CD4-positive, alpha-beta memory T cell (primary cell): ENCODE measurements at regions of chr5 and their contacts with region 1.

Region 1: DNA sequence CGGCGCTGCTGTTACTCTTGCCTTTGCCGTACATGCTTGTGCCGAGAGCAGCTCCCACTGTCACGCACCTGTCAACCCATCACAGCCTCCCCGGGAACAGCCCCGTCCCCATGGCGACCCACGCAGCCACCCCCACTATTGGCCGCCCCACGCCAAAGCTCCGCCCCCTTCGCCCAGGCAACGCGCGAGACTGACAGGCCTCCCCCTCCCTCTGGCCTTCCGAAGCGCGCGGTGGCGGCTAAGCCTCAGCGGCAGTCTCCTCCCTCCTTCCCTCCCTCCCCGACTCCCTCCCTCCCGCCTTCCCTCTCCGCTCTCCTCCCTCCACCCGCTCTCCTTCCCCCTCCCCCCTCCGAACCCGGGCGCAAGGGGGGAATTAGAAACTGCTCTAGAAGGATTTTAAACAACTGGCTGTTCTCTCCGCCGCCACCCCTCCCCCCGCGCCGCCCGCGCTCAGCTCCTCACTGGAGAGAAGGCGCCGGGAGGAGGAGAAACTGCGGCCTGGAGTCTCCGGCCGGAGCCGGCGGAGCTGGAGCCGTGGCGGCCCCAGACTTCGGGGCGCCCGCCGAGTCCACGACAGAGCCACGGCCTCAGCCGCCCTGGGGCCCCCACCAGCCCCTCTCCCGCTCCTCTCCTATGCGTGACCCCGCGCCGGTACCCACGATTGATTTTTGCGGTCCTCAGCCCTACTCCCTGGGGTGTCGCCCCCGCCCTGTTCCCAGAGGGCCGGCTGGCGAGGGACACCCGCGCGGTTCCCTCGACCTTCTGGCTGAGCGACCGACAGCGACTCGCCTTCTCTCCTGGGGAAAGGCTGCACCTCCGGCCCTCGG is at the start of gene SSBP2:
- DNase-seq: peak; percentile 99 to 100 (median 100)
- H3K4me3 ChIP-seq: peak within 1 kb of the TSS in 1 of 2 donors; percentile 68
- H3K4me3 Mint-ChIP-seq: peak within 1 kb of the TSS; percentile 94 to 97 (median 96)
- H3K27ac ChIP-seq: peak within 1 kb of the TSS; percentile 75
- H3K27ac Mint-ChIP-seq: peak within 1 kb of the TSS; percentile 95 to 98 (median 96)
- H3K4me1 ChIP-seq: peaks cover 20% of the 10 kb centered on the region
- H3K4me1 Mint-ChIP-seq: peaks cover 15 to 39% (median 32%) of the 10 kb centered on the region in 4 donors
- H3K27me3 ChIP-seq: no peaks in the 10 kb centered on the region
- H3K27me3 Mint-ChIP-seq: peaks cover 0 to 2% of the 10 kb centered on the region in 2 donors
- total RNA-seq, gene SSBP2: 54.4 to 63.3 TPM

Region 2: GRCh38 chr5:81301271-81302015 is 449.8 kb before region 1 on chr5 and contains the start of gene ZCCHC9:
- CTCF ChIA-PET with region 1: interaction called, 3 read pairs
- POLR2A ChIA-PET with region 1: interaction called, 14 read pairs
- intact Hi-C with region 1: loop called (anchors 1 kb)
- DNase-seq: peak; percentile 90 to 94 (median 92)
- H3K4me3 ChIP-seq: peak within 1 kb of the TSS; percentile 98 to 99
- H3K4me3 Mint-ChIP-seq: peak within 1 kb of the TSS; percentile 91 to 99 (median 94)
- H3K27ac ChIP-seq: peak within 1 kb of the TSS; percentile 83
- H3K27ac Mint-ChIP-seq: peak within 1 kb of the TSS; percentile 87 to 99 (median 97)
- H3K4me1 ChIP-seq: peaks cover 30% of the 10 kb centered on the region
- H3K4me1 Mint-ChIP-seq: peaks cover 30 to 67% (median 49%) of the 10 kb centered on the region in 4 donors
- H3K27me3 ChIP-seq: no peaks in the 10 kb centered on the region
- H3K27me3 Mint-ChIP-seq: no peaks in the 10 kb centered on the region
- total RNA-seq, gene ZCCHC9: 25.2 to 26.1 TPM

Region 3: DNA sequence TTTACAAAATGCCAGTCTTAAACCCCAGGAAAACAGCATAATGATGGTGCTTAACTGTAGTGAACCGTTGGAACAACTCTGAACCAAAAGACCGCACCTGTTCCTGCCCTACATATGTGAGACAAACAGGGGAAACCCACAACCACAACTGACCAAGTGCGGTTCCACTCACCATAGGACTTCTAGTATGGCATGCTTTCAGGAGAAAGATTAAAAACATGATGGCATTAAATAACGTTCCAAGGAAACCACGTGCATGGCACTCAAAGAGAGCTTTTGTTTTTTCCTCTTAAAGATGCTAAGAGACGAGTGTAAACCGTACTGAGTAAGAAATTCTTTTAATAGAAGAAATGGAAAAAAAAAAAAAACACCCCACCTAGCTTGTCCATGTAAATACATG is 120.1 kb before region 1 on chr5:
- CTCF ChIA-PET with region 1: no interaction called
- POLR2A ChIA-PET with region 1: no interaction called
- intact Hi-C with region 1: no loop called
- DNase-seq: peak; percentile 37 to 57 (median 53)
- H3K4me3 ChIP-seq: no peak overlapping the region
- H3K4me3 Mint-ChIP-seq: no peak overlapping the region
- H3K27ac ChIP-seq: no peak overlapping the region
- H3K27ac Mint-ChIP-seq: peak overlapping the region in 3 of 7 donors; percentile 6 to 42 (median 25)
- H3K4me1 ChIP-seq: peaks cover 23% of the 10 kb centered on the region
- H3K4me1 Mint-ChIP-seq: peaks cover 4 to 11% (median 6%) of the 10 kb centered on the region in 4 donors
- H3K27me3 ChIP-seq: no peaks in the 10 kb centered on the region
- H3K27me3 Mint-ChIP-seq: no peaks in the 10 kb centered on the region

Region 4: GRCh38 chr5:81718300-81718699 is 32.9 kb before region 1 on chr5:
- CTCF ChIA-PET with region 1: no interaction called
- POLR2A ChIA-PET with region 1: interaction called, 17 read pairs
- intact Hi-C with region 1: no loop called
- DNase-seq: no peak
- H3K4me3 ChIP-seq: no peak overlapping the region
- H3K4me3 Mint-ChIP-seq: peak overlapping the region in 6 of 8 donors; percentile 2 to 51 (median 46)
- H3K27ac ChIP-seq: no peak overlapping the region
- H3K27ac Mint-ChIP-seq: peak overlapping the region in 1 of 7 donors; percentile 71
- H3K4me1 ChIP-seq: peaks cover 43% of the 10 kb centered on the region
- H3K4me1 Mint-ChIP-seq: peaks cover 40 to 82% (median 61%) of the 10 kb centered on the region in 4 donors
- H3K27me3 ChIP-seq: no peaks in the 10 kb centered on the region
- H3K27me3 Mint-ChIP-seq: no peaks in the 10 kb centered on the region

Region 5: DNA sequence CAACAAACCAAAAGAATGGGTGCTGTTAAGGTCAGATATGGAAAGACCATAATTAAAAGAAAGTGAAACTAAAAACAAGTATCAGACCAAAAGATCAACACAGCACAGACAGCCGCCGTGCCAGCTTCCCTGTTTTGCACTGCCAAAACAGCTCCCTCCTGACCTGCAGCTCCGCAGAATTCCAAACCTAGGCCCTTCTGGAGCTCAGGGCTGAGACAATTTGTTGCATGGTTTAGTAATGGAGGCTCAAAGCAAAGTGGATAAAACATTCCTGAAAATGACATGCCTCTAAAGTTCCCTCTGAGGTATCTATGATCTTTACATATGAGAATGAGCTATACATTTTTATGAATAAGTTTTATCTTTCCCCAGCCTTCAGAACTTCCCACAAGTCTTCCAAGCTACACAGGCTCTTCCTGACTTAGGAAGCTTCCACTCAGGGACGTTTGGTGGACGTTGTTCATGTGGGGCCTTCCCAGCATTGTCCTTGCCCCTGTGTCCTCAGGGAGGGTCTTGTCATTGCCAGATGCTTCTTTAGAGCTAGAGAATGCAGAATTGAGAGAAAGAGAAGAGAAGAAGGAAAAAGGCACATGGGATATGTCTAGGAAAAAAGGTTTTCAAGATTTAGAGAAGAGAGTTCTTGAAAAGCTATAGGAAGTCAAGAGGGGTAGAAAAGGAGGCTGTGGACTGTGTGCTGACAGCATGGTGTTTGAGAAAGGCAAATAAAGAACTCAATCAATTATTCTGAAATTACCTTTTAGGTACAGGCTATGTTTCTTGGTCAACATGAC is 28.1 kb after region 1 on chr5:
- CTCF ChIA-PET with region 1: interaction called, 5 read pairs
- POLR2A ChIA-PET with region 1: interaction called, 68 read pairs
- intact Hi-C with region 1: loop called (anchors 1 kb)
- DNase-seq: peak; percentile 18 to 48 (median 40)
- H3K4me3 ChIP-seq: peak overlapping the region; percentile 40 to 48
- H3K4me3 Mint-ChIP-seq: peak overlapping the region; percentile 84 to 92 (median 86)
- H3K27ac ChIP-seq: peak overlapping the region; percentile 69
- H3K27ac Mint-ChIP-seq: peak overlapping the region; percentile 85 to 97 (median 94)
- H3K4me1 ChIP-seq: peaks cover 17% of the 10 kb centered on the region
- H3K4me1 Mint-ChIP-seq: peaks cover 16 to 27% (median 20%) of the 10 kb centered on the region in 4 donors
- H3K27me3 ChIP-seq: no peaks in the 10 kb centered on the region
- H3K27me3 Mint-ChIP-seq: no peaks in the 10 kb centered on the region

Region 6: DNA sequence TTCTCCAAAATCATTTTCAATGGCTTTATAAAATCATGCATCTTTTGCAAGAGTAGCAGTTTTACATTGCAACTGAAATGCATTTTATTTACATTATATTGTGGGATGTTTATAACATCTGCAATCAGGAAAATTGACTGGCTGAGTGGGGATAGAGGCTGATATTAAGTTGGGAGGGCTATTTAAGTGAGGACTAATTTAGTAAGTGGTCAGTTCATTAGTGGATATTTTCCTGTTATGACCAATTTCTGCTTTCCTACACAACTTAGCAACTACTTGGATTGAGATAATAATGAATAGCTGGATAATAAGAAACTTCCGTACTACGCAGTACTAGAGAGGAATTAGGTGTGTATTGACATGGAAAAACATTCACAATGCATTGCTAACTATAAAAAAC is 92.6 kb after region 1 on chr5:
- CTCF ChIA-PET with region 1: interaction called, 16 read pairs
- POLR2A ChIA-PET with region 1: interaction called, 475 read pairs
- intact Hi-C with region 1: no loop called
- DNase-seq: no peak
- H3K4me3 ChIP-seq: no peak overlapping the region
- H3K4me3 Mint-ChIP-seq: no peak overlapping the region
- H3K27ac ChIP-seq: no peak overlapping the region
- H3K27ac Mint-ChIP-seq: no peak overlapping the region
- H3K4me1 ChIP-seq: no peaks in the 10 kb centered on the region
- H3K4me1 Mint-ChIP-seq: peaks cover under 1 to 2% (median 1%) of the 10 kb centered on the region in 4 donors
- H3K27me3 ChIP-seq: no peaks in the 10 kb centered on the region
- H3K27me3 Mint-ChIP-seq: no peaks in the 10 kb centered on the region

Region 7: GRCh38 chr5:82165740-82166530 is 414.7 kb after region 1 on chr5:
- CTCF ChIA-PET with region 1: interaction called, 6 read pairs
- POLR2A ChIA-PET with region 1: interaction called, 4 read pairs
- intact Hi-C with region 1: loop called (anchors 10 kb)
- DNase-seq: peak; percentile 34 to 54 (median 50)
- H3K4me3 ChIP-seq: no peak overlapping the region
- H3K4me3 Mint-ChIP-seq: no peak overlapping the region
- H3K27ac ChIP-seq: no peak overlapping the region
- H3K27ac Mint-ChIP-seq: peak overlapping the region in 2 of 7 donors; percentile 3 to 12
- H3K4me1 ChIP-seq: no peaks in the 10 kb centered on the region
- H3K4me1 Mint-ChIP-seq: peaks cover 0 to 5% (median under 1%) of the 10 kb centered on the region in 4 donors
- H3K27me3 ChIP-seq: no peaks in the 10 kb centered on the region
- H3K27me3 Mint-ChIP-seq: no peaks in the 10 kb centered on the region

Region 8: GRCh38 chr5:83076742-83077661 is 1325.8 kb after region 1 on chr5 and contains the starts of genes TMEM167A and XRCC4:
- CTCF ChIA-PET with region 1: no interaction called
- POLR2A ChIA-PET with region 1: interaction called, 3 read pairs
- intact Hi-C with region 1: loop called (anchors 1 kb)
- DNase-seq: peak; percentile 92 to 98 (median 95)
- H3K4me3 ChIP-seq: peak within 1 kb of the TSS; percentile 82 to 94
- H3K4me3 Mint-ChIP-seq: peak within 1 kb of the TSS; percentile 95 to 99 (median 98)
- H3K27ac ChIP-seq: peak within 1 kb of the TSS; percentile 85
- H3K27ac Mint-ChIP-seq: peak within 1 kb of the TSS; percentile 91 to 99 (median 98)
- H3K4me1 ChIP-seq: peaks cover 53% of the 10 kb centered on the region
- H3K4me1 Mint-ChIP-seq: peaks cover 40 to 67% (median 53%) of the 10 kb centered on the region in 4 donors
- H3K27me3 ChIP-seq: no peaks in the 10 kb centered on the region
- H3K27me3 Mint-ChIP-seq: no peaks in the 10 kb centered on the region
- total RNA-seq, gene TMEM167A: 44.6 to 47.9 TPM
- total RNA-seq, gene XRCC4: 4.1 to 4.2 TPM